ENCODE measurements at regions of chr12 and their contacts with region 1.

Region 1: GRCh38 chr12:57836442-57837375 is 9.8 kb downstream of the CTDSP2 start:
- DNase-seq: no peak
- ATAC-seq: peak; percentile 20
- H3K4me3 Mint-ChIP-seq: peak overlapping the region; percentile 64
- H3K27ac Mint-ChIP-seq: peak overlapping the region; percentile 84
- H3K4me1 Mint-ChIP-seq: peaks cover 97% of the 10 kb centered on the region
- H3K27me3 Mint-ChIP-seq: no peaks in the 10 kb centered on the region
- CTCF ChIP-seq: no peak

Region 2: DNA sequence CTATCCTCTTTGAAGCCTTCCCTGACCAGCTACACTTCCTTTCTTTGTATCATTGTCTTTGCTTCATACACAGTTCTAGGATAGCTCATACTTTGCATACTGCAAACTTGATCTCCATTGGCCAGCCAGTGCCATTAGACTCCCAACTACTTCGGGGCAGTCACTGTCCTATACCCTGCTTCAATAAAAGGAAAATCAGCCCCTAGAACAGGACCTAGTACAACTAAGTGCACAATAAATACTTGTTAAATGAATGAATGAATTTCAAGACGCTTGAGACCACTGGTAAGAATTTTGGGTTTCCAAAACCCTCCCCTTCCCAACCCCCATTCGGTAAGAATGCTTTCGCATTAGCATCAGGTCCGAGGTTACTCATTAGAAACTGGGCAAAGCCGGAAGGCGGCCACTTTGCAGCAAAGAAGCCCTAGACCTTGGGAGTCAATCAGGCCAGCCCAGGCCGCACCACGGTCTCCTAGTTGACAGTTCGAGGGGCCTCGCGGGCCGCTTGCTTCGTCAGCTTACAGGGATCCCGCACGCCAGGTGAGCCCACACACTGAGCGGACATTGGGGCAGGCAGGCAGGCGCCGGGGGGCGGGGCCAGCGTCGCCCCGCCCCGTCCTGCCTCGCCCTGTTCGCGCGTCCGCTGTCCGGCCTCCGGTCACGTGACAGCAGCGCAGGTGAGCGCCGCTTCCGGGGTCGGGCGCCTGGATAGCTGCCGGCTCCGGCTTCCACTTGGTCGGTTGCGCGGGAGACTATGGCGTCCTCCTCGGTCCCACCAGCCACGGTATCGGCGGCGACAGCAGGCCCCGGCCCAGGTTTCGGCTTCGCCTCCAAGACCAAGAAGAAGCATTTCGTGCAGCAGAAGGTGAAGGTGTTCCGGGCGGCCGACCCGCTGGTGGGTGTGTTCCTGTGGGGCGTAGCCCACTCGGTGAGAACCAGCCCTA is 245.9 kb before region 1 on chr12 and contains the start of gene PIP4K2C:
- CTCF ChIA-PET with region 1: no interaction called
- POLR2A ChIA-PET with region 1: no interaction called
- intact Hi-C with region 1: no loop called
- DNase-seq: peak; percentile 79
- ATAC-seq: peak; percentile 96
- H3K4me3 Mint-ChIP-seq: peak within 1 kb of the TSS; percentile 88
- H3K27ac Mint-ChIP-seq: peak within 1 kb of the TSS; percentile 68
- H3K4me1 Mint-ChIP-seq: peaks cover 19% of the 10 kb centered on the region
- H3K27me3 Mint-ChIP-seq: no peaks in the 10 kb centered on the region
- CTCF ChIP-seq: no peak
- total RNA-seq, gene PIP4K2C: 16.5 and 17.9 TPM in 2 replicates

Region 3: DNA sequence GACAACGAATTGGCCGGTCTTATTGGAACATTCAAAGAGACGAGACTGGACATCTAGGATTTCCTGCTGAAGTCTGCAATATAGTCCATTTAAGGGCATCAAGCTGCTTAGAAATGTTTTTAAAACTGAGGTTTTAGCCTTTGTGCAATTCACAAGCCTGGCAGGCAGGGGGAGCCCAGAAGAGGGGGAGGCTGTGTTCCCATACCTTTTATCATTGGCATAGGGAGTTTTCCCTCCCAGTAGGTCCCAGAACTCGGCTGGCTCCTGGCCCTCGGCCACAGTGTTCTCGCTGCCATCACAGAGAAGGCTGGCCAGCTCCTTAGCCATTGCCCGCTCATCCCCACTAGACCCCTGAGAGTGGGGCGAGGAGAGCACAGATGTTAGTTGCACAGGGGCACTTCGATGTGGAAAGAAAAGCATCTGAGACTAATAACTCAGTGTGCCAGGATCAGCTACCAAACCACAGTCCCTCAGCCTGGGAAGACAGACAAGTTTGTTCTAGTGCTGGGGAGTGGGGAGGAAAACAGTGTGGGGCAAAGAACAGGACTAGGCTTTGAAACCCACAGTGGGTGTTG is 33.3 kb before region 1 on chr12:
- CTCF ChIA-PET with region 1: no interaction called
- POLR2A ChIA-PET with region 1: no interaction called
- intact Hi-C with region 1: loop called (anchors 1 kb)
- DNase-seq: no peak
- ATAC-seq: peak; percentile 54
- H3K4me3 Mint-ChIP-seq: no peak overlapping the region
- H3K27ac Mint-ChIP-seq: no peak overlapping the region
- H3K4me1 Mint-ChIP-seq: no peaks in the 10 kb centered on the region
- H3K27me3 Mint-ChIP-seq: no peaks in the 10 kb centered on the region
- CTCF ChIP-seq: no peak

Region 4: DNA sequence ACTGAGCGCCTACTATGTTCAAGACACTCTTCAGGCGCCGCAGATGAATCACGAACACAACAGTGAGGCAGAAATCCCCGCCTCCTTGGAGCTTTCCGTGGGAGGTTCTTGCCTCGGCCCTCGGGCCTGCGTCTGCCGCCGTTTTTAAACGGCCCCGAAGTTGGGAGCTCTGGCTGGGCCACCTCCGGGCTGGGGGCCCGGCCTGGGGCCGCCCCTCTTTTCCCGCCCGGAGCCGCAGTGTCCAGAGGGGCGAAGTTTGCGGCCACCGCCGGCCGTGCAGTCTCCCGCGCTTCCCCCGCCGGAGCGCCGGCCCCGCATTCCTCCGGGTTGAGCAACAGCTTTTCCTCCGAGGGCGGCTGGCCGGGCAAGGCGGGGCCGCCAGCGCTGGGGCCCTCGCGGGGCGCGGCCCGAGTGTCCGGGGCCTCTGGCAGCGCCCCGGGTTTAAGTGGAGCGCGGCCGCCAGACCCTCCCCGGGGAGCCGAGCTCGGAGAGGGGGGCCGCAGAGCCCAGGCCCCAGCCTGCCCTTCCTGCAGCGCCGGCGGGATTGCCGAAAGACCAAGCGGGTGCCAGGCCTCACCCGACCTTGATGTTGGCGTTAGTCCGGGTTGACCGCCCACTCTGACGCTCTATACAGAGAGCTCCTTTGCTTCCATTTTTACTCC is 28.5 kb after region 1 on chr12:
- CTCF ChIA-PET with region 1: interaction called, 4 read pairs
- POLR2A ChIA-PET with region 1: interaction called, 4 read pairs
- intact Hi-C with region 1: loop called (anchors 5 kb)
- DNase-seq: peak; percentile 39
- ATAC-seq: peak; percentile 86
- H3K4me3 Mint-ChIP-seq: peak overlapping the region; percentile 69
- H3K27ac Mint-ChIP-seq: no peak overlapping the region
- H3K4me1 Mint-ChIP-seq: peaks cover 8% of the 10 kb centered on the region
- H3K27me3 Mint-ChIP-seq: peaks cover 22% of the 10 kb centered on the region
- CTCF ChIP-seq: no peak